Lower leg skin (tissue), 4 donors: ENCODE measurements at regions of chr14 and their contacts with region 1.

Region 1: GRCh38 chr14:104078031-104078455 is 7.5 kb upstream of the ASPG start:
- DNase-seq: peak; percentile 83 to 97
- H3K4me3 ChIP-seq: no peak overlapping the region
- CTCF ChIP-seq: peak in 2 of 3 donors; percentile 90 to 96
- POLR2A ChIP-seq: no peak

Region 2: DNA sequence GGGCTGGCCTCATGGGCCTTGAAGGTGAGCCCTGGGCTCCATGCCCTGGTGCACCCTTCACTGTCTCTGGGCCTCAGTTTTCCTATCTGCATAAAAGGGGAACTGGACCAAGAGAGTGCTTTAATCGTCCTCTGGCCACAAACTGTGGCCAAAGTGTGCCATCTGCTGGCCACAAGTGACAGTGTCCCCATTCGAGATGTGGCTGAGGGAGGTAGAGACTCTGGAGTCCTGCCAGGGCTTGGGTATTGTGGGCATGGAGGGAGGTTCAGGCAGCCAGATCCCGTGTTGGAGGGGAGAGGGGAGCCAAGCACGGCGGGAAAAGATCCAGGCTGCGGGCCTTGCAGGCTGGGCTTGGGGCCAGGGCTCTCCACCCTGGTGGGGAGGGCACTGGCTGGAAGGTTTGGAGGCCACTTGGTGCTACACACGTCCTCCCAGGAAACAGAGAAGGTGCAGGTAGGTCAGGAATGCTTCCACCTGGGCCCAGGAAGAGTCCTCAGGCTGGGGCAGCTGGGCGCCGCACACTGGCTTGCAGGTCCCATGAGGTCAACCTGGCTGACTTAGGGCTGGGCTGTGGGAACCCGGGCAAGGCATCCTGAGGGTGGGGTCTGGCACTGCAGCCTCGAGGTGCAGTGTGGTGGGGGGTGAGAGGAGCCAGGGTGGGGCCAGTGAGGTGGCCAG is 53.1 kb after region 1 on chr14:
- intact Hi-C with region 1: loop called (anchors 5 kb)
- DNase-seq: peak in 1 of 2 donors; percentile 85
- H3K4me3 ChIP-seq: no peak overlapping the region
- CTCF ChIP-seq: no peak
- POLR2A ChIP-seq: no peak